Psoas muscle (tissue), 8 donors: ENCODE measurements at regions of chr5 and their contacts with region 1.

Region 1: GRCh38 chr5:127290019-127290945 is at the start of gene MEGF10:
- DNase-seq: peak; percentile 39 to 72
- ATAC-seq: peak; percentile 92 to 94 (median 93)
- H3K4me3 ChIP-seq: peak within 1 kb of the TSS; percentile 75
- H3K27ac ChIP-seq: peak within 1 kb of the TSS; percentile 67
- H3K4me1 ChIP-seq: no peaks in the 10 kb centered on the region
- H3K27me3 ChIP-seq: peaks cover 0 to 6% (median 0%) of the 10 kb centered on the region in 3 donors
- CTCF ChIP-seq: peak; percentile 71
- total RNA-seq, gene MEGF10: 1.6 to 23.6 (median 7.9) TPM

Region 2: GRCh38 chr5:127410959-127411358 is 120.7 kb after region 1 on chr5:
- intact Hi-C with region 1: loop called in 1 of 2 experiments (anchors 10 kb)
- DNase-seq: no peak
- ATAC-seq: no peak
- H3K4me3 ChIP-seq: no peak overlapping the region
- H3K27ac ChIP-seq: no peak overlapping the region
- H3K4me1 ChIP-seq: peaks cover 17% of the 10 kb centered on the region
- H3K27me3 ChIP-seq: no peaks in the 10 kb centered on the region
- CTCF ChIP-seq: no peak

Region 3: DNA sequence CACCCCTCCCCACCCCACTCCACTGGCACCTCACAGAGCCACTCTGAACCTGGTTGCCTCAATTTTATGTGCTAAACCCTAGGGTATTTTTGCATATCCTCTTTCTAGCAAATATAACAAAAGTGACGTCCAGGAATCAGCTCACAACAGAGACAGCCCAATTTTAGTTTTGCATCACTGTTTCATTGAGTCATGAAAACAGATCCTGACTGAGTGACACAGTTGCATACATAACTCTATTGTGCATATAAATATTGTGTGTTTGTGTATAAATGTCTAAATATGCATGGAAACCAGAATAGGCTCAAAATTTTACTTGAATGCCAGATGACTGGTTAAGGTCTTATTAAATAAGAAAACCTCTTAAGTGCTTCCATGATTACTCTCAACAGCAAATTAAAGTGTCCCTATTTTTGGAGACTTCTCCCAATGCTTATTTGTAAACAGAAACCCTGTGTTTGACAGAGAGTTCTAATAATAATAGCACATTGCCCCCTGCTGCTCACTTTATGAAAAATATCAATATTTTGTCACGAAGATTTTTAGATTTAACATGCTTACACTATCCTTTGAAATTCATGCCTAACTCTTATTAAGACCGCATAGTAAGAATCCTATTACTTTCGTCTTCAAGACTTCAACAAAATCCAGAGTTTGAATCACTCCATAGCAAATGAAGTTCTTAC is 151.7 kb after region 1 on chr5:
- intact Hi-C with region 1: loop called (anchors 2 kb)
- DNase-seq: no peak
- ATAC-seq: peak in 2 of 4 donors; percentile 36 to 38
- H3K4me3 ChIP-seq: no peak overlapping the region
- H3K27ac ChIP-seq: no peak overlapping the region
- H3K4me1 ChIP-seq: peaks cover 4% of the 10 kb centered on the region
- H3K27me3 ChIP-seq: no peaks in the 10 kb centered on the region
- CTCF ChIP-seq: peak; percentile 29